HAP-1 (cell line): ENCODE measurements at regions of chr10 and their contacts with region 1.

Region 1: GRCh38 chr10:19819419-19820033 is 3.3 kb downstream of the PLXDC2 start:
- DNase-seq: peak; percentile 51 to 63
- H3K4me3 ChIP-seq: no peak overlapping the region
- H3K4me1 ChIP-seq: peaks cover 18% of the 10 kb centered on the region
- H3K27me3 ChIP-seq: no peaks in the 10 kb centered on the region

Region 2: GRCh38 chr10:19974138-19974537 is 154.6 kb after region 1 on chr10:
- in situ Hi-C with region 1: no loop called
- DNase-seq: no peak
- H3K4me3 ChIP-seq: no peak overlapping the region
- H3K4me1 ChIP-seq: peaks cover 12% of the 10 kb centered on the region
- H3K27me3 ChIP-seq: no peaks in the 10 kb centered on the region

Region 3: DNA sequence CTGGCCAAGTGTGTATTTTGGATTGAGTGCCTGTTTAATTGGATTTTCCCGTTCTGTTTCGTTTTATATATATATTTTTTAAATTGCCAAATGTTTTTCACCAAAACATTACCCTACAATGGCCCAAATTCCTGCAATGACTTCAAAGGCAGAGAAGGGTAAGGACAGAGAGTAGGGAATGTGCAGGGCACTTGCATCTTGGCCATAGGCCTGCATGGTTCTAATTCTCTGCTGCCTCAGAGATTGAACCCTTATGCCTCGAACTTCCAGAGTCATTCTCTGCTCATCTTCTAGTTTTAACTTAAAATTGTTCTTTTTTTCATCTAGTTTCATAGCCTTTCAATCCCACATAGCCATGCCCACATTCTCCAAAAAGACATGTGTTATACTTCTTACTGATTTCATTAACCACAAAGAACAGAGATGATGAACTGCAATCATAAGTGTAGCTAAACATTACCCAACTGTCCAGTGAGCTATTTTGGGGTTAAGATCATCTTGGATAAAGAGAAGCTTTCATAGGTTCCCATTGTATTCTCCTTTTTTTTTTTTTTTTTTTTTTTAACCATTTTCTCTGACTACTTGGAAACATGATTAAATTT is 174.3 kb after region 1 on chr10:
- in situ Hi-C with region 1: no loop called
- DNase-seq: no peak
- H3K4me3 ChIP-seq: no peak overlapping the region
- H3K4me1 ChIP-seq: no peaks in the 10 kb centered on the region; the same call in 1 of the 2 replicates
- H3K27me3 ChIP-seq: no peaks in the 10 kb centered on the region

Region 4: DNA sequence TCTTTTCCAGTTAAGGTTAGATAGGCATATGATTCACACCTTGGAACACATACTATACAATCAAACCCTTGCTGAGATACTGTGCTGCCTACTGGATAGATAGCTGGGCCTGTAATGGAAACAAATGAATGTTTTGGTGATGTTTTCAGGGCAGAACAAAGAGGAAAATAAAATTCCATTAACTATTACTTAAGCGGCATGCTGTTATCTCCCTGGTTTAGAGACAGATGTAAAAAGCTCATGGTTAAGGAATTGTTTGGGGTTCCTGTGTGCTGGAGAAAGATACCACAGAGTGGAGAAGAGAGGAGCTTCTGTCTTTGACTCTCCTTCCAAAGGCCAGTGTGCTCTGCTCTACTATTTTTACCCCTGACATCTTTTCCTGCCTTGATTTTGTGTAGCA is 337.8 kb after region 1 on chr10:
- in situ Hi-C with region 1: loop called (anchors 10 kb)
- DNase-seq: no peak
- H3K4me3 ChIP-seq: no peak overlapping the region
- H3K4me1 ChIP-seq: peaks cover 12% of the 10 kb centered on the region
- H3K27me3 ChIP-seq: no peaks in the 10 kb centered on the region

Region 5: DNA sequence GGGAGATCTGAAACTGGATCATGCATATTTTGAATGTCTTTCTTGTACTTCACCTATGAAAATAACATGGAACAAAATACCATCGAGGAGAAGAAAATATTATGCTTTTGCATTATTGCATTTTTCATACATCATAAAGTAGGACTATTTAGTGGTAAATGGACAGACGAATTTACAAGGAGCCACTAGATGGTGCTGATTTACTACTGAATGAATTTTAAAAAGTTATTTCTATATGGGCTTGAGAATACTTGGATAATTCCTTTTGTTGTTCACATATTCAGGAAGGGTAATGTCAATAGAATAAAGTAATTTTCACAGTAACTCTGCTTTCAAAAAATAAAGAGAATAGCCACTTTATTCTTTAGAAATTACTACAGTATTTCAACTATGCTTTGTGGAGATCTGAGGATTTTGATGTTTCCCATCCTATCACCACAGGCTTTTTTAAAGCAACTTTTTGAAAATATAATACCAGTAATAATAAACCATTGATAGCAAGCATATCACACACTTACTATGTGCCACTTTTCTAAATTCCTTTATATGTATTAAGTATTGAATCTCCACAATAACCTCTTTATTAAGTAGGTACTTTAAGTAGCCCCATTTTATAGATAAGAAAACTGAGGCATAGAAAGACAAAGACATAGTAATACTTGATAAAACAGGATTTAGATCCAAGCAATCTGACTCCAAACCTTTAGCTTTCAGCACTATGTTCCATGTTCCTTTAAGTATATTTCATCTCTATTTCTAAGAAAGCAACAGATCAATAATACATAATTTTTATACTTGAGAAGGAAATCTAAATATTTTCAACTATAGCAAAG is 1039.0 kb after region 1 on chr10:
- in situ Hi-C with region 1: loop called (anchors 25 kb)
- DNase-seq: peak in 1 of 2 experiments; percentile 55
- H3K4me3 ChIP-seq: no peak overlapping the region
- H3K4me1 ChIP-seq: no peaks in the 10 kb centered on the region
- H3K27me3 ChIP-seq: no peaks in the 10 kb centered on the region